HEK293 (cell line): ENCODE measurements at regions of chr5 and their contacts with region 1.

Region 1: DNA sequence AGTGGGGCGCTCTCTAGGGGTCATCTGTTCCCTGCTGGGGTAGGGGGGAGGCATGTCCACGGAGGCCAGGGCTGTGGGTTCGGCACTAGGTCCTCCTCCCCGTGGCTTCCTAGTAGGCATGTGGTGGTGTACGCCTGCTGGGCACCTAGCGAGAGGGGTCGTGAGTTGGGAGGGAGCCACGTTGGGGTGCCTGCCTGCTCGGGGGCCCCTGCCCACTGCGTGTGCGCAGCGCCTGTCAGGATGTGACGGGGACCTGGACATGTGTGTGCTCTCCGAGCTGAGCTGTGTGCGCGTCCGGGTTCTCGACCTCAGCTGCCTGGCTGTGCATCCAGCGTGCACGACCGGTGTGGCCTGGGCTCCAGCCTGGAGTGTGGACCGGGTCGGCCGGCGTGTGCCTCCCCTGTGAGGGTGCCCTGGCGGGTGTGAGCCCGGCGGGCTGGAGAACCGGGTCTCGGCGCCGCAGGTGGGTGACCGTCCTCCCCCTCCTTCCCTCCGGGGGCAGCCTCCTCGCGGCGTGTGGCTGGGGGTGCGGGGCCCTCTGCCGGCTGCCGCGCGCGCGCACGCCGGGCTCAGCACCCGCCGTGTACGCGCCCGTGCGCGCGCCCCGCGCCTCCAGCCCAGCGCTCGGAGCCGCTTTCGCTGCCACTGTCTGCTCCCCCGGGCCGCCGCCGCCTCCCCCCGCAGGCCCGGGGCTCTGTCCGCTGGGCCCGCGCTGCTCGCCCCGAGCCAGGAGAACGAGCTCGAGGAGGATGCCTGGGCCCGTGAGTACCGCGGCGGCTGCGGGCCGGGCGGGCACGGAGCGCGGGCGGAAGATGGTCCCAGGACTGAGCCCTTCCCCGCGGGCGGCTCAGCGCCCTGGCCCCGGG is at the start of gene PRR7:
- H3K4me3 ChIP-seq: peak within 1 kb of the TSS; percentile 54
- H3K27ac ChIP-seq: peak within 1 kb of the TSS; percentile 60; the same call in 1 of the 2 replicates
- H3K4me1 ChIP-seq: no peaks in the 10 kb centered on the region
- CTCF ChIP-seq: peak; percentile 72

Region 2: GRCh38 chr5:177294632-177295260 is 151.7 kb before region 1 on chr5:
- CTCF ChIA-PET with region 1: no interaction called
- POLR2A ChIA-PET with region 1: no interaction called
- H3K4me3 ChIP-seq: no peak overlapping the region
- H3K27ac ChIP-seq: no peak overlapping the region
- H3K4me1 ChIP-seq: 0 out of 2 replicates have a peak, but pooled peaks cover 3% of the 10 kb centered on the region
- CTCF ChIP-seq: no peak

Region 3: GRCh38 chr5:177431317-177432142 is 14.9 kb before region 1 on chr5:
- CTCF ChIA-PET with region 1: interaction called, 3 read pairs
- POLR2A ChIA-PET with region 1: interaction called, 21 read pairs
- H3K4me3 ChIP-seq: no peak overlapping the region
- H3K27ac ChIP-seq: no peak overlapping the region
- H3K4me1 ChIP-seq: no peaks in the 10 kb centered on the region
- CTCF ChIP-seq: no peak